Cardiac septum (tissue), 1 donor: ENCODE measurements at regions of chr1 and their contacts with region 1.

Region 1: DNA sequence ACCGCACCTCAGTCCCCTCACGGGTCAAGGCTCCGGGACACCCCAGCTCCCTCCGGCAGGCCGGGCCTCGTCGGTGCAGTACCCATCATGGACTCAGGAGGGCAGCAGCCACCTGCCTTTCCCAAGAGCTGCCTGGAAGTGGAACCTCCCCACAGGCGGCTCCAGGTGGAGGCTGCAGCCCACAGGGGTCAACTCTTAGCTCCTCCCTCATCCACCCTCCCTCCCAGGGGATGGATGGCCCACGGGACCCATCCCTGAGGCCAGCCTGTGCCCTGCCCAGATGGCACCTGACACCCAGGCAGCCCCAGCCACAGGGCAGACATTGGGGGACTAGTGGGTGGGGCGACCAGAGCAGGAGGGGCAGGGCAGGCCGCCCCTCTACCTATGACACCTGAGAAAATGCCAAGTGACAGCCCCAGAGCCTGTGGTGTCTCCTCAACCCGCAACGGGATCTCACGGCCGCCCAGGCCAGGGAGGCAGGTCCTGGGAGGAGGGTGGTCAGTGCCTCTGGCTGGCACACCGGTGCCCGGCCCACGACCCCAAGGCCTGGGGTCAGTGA is 1.2 kb upstream of the ARHGEF16 start:
- DNase-seq: peak; percentile 86

Region 2: GRCh38 chr1:3483801-3484444 is 30.6 kb after region 1 on chr1:
- intact Hi-C with region 1: loop called (anchors 1 kb)
- DNase-seq: no peak